PC-9 (cell line): ENCODE measurements at regions of chr2 and their contacts with region 1.

Region 1: GRCh38 chr2:68411397-68412126 is 46.5 kb downstream of the PLEK start:
- DNase-seq: no peak
- H3K4me3 ChIP-seq: no peak overlapping the region
- H3K27ac ChIP-seq: no peak overlapping the region
- H3K4me1 ChIP-seq: no peaks in the 10 kb centered on the region
- H3K27me3 ChIP-seq: peaks cover 27% of the 10 kb centered on the region
- CTCF ChIP-seq: no peak

Region 2: GRCh38 chr2:68203587-68203986 is 208.0 kb before region 1 on chr2:
- CTCF ChIA-PET with region 1: interaction called, 10 read pairs
- POLR2A ChIA-PET with region 1: no interaction called
- intact Hi-C with region 1: no loop called
- DNase-seq: no peak
- H3K4me3 ChIP-seq: no peak overlapping the region
- H3K27ac ChIP-seq: no peak overlapping the region
- H3K4me1 ChIP-seq: no peaks in the 10 kb centered on the region
- H3K27me3 ChIP-seq: no peaks in the 10 kb centered on the region
- CTCF ChIP-seq: no peak

Region 3: DNA sequence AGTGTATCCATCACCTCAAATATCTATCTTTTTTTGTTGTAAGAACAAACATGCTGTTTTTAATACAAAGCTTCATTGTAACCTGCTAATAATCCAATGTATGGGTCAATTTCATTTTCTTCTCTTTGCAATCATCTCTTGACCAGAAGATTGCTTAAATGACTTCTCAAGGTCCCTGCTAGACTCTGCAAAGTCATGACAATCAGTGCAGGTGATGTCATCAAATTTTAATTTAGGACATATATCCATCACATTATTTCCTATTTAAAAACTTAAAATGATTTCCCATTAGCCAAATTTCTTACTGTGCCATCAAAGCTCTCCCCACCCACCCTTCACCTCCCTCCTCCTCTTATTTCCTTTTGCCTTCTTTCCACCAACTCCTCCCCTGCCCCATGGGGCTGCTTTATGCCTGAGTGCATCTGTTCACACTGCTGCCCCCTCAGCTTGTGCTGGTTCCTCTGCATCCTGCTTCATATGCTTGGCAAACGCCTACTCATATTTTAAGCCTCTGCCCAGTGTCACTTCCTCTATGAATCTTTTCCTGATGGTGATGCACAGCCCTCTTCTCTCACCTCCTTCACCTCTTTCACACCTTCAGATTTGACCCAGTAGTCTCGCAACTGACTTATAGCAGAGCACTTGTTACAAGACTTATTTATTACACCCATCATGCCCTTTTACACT is 26.2 kb before region 1 on chr2:
- CTCF ChIA-PET with region 1: no interaction called
- POLR2A ChIA-PET with region 1: no interaction called
- intact Hi-C with region 1: no loop called
- DNase-seq: no peak
- H3K4me3 ChIP-seq: no peak overlapping the region
- H3K27ac ChIP-seq: no peak overlapping the region
- H3K4me1 ChIP-seq: no peaks in the 10 kb centered on the region
- H3K27me3 ChIP-seq: peaks cover 21% of the 10 kb centered on the region
- CTCF ChIP-seq: no peak